ENCODE measurements at regions of chr2 and their contacts with region 1.

Region 1: GRCh38 chr2:219149667-219150066 is 10.9 kb downstream of the NHEJ1 start:
- DNase-seq: no peak
- ATAC-seq: no peak
- H3K4me3 ChIP-seq: no peak overlapping the region
- H3K27ac ChIP-seq: no peak overlapping the region
- H3K4me1 ChIP-seq: no peaks in the 10 kb centered on the region
- H3K27me3 ChIP-seq: no peaks in the 10 kb centered on the region
- CTCF ChIP-seq: no peak

Region 2: GRCh38 chr2:218892693-218893348 is 256.8 kb before region 1 on chr2:
- intact Hi-C with region 1: no loop called
- DNase-seq: peak; percentile 70 to 82
- ATAC-seq: peak; percentile 86 to 95 (median 90)
- H3K4me3 ChIP-seq: peak overlapping the region; percentile 61
- H3K27ac ChIP-seq: no peak overlapping the region
- H3K4me1 ChIP-seq: peaks cover 6% of the 10 kb centered on the region
- H3K27me3 ChIP-seq: peaks cover 0 to 53% (median 22%) of the 10 kb centered on the region in 3 donors
- CTCF ChIP-seq: peak; percentile 44

Region 3: GRCh38 chr2:219029829-219030165 is 119.9 kb before region 1 on chr2:
- intact Hi-C with region 1: loop called in 1 of 2 experiments (anchors 5 kb)
- DNase-seq: peak; percentile 81 to 86
- ATAC-seq: peak; percentile 83 to 95 (median 92)
- H3K4me3 ChIP-seq: no peak overlapping the region
- H3K27ac ChIP-seq: no peak overlapping the region
- H3K4me1 ChIP-seq: no peaks in the 10 kb centered on the region
- H3K27me3 ChIP-seq: peaks cover 0 to 40% (median 0%) of the 10 kb centered on the region in 3 donors
- CTCF ChIP-seq: peak; percentile 97

Region 4: DNA sequence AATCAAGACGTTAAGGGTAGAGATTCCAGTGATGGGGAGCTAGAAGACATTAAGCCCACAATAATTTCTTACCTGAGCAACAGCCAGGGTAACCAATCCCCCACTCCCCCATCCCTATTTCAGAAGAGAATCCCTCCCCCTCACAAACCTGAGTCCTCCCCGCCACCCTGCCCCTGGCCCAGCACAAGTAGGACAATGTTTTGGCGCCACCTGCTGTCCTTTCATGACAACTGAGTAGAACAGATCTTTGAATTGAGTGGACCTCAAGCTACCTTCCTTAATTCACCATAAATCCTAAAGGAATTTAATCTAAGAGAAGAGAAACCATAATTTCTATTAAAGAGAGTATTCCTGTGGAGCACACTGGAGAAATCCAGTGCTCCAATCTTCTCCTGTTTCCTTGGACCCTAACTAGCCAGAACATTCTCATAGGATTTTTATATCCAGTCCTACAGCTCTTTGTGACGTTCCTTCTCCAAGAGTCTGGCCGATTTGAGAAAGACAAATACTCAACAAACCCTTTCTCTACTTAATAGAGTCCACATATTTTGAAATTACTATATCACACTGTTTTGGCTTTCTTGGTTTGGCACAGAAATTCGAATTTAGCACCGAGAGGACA is 30.1 kb before region 1 on chr2:
- intact Hi-C with region 1: no loop called
- DNase-seq: peak; percentile 50 to 77
- ATAC-seq: peak; percentile 58 to 85 (median 74)
- H3K4me3 ChIP-seq: no peak overlapping the region
- H3K27ac ChIP-seq: no peak overlapping the region
- H3K4me1 ChIP-seq: no peaks in the 10 kb centered on the region
- H3K27me3 ChIP-seq: no peaks in the 10 kb centered on the region
- CTCF ChIP-seq: peak; percentile 67

Region 5: DNA sequence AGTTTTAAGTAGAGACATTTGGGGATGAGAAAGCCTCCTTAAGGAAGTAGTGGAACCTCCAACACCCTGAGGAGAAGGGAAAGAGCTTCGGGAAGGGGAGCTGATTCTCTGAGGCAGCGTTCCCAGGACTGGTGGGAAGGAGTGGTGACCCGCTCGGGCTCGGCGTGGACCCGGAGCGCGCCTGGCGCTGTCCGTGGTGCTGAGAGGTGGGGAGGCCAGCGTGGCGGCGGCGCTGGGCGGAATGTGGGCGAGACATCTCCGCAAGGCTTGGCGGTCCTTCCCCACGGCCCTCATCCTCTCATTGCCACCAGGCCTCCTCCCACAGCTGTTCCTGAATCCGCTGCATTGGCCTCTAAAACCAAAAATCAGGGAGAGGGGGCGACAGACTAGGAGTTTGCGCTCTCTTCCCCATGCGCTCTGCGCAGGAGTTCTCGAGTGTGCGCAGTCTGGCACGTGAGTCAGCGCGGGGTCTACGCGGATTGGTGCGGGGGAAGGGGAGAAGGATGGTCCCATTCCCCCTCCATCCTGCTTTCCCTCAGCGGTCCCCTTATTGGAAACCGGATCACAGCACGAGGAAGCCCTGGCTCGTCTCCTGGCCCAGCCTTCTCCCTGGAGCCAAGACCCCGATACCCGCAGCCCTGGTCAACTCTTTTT is 182.0 kb after region 1 on chr2:
- intact Hi-C with region 1: no loop called
- DNase-seq: peak; percentile 35 to 64
- ATAC-seq: peak in 3 of 4 donors; percentile 61 to 78 (median 75)
- H3K4me3 ChIP-seq: no peak overlapping the region
- H3K27ac ChIP-seq: no peak overlapping the region
- H3K4me1 ChIP-seq: no peaks in the 10 kb centered on the region
- H3K27me3 ChIP-seq: peaks cover 12 to 35% (median 13%) of the 10 kb centered on the region in 3 donors
- CTCF ChIP-seq: no peak

Region 6: DNA sequence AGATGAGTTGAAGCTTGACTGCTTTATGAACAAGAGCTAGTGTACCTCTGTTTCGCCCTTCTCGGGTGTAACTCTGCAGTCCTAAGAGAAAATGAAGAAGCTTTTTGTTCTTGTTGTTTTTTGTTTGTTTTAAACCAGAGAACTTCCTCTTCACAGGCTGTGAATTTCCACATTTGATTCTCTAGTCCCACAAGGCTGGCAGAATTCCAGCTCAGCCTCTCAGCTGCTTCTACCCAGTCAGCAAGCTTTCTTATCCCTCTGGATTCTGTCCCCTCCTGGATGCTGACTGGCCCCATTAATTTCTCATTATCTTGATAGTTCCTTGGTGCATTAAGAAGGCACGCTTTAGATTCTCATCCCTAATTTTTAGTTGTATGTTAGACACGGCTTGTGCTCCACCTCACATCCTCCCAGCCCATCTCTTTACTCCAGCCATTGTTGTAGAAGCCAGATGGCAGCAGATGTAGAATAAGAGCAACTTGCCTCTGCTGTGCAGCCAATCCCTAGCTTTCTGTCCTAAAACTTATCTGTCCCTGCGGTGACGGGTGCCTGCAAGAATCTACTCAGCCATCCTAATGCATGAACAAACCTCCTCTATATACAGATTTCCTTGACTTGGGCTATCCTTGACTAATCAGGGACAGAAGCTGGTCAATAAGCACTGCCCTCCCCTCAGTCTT is 195.2 kb after region 1 on chr2:
- intact Hi-C with region 1: no loop called
- DNase-seq: no peak
- ATAC-seq: no peak
- H3K4me3 ChIP-seq: no peak overlapping the region
- H3K27ac ChIP-seq: no peak overlapping the region
- H3K4me1 ChIP-seq: no peaks in the 10 kb centered on the region
- H3K27me3 ChIP-seq: peaks cover 0 to 9% (median 0%) of the 10 kb centered on the region in 3 donors
- CTCF ChIP-seq: no peak